Activated CD4-positive, alpha-beta T cell treated with anti-CD3 and anti-CD28 coated beads, Interleukin-2, amount 10 ng/mL, durations not matched to agents 24 days and 14 days (primary cell): ENCODE measurements at regions of chr6 and their contacts with region 1.

Region 1: DNA sequence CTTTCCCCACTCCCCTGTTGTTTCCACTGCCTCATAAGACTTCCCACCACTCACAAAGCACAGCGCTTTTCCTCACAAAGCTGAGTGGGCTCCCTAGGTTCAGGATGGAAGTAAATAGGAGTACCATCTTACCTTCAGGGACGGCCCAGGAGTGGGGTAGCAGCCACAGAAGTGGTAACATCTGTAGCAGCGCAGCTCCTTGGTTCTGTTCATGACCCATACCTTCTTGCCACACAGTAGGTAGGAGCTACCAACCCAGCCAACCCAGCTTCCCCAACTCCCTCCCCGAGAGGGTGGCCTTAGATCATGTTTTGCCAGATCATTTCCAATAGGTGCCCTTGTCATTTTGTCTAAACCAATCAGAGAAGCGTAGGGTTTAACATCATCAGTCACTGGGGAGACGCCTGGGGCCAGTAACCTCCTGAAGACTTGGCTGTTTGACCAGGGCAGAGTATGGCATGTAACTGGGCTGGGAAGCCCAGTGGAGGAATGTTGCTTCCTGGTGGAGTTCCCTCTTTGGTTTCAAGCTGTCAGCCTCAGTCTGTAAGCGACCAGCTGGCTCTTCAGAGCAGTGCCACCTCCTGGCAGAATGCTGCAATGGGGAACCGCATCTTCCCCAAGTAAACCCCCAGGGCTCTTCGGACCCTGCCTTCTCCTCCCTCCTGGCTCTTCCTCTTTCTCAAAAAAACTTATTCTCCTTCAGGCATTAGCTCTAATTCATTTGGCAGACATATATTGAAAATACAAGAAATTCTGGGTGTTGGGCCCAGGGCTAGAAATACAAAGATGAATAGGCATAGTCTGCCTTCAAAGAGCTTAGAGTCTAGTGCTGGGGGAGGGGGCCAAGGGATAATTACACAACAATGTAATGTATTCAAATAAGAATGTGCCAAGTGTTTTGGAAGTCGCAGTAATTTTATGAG is at the start of gene HLA-DMA:
- DNase-seq: peak; percentile 94
- H3K4me3 Mint-ChIP-seq: peak within 1 kb of the TSS; percentile 84
- H3K27ac Mint-ChIP-seq: peak within 1 kb of the TSS; percentile 77
- H3K4me1 Mint-ChIP-seq: peaks cover 49% of the 10 kb centered on the region
- H3K27me3 Mint-ChIP-seq: no peaks in the 10 kb centered on the region
- total RNA-seq, gene HLA-DMA: 8.1 and 8.7 TPM in 2 replicates

Region 2: GRCh38 chr6:32885698-32886286 is 67.3 kb before region 1 on chr6:
- intact Hi-C with region 1: loop called (anchors 1 kb)
- DNase-seq: no peak
- H3K4me3 Mint-ChIP-seq: no peak overlapping the region
- H3K27ac Mint-ChIP-seq: no peak overlapping the region
- H3K4me1 Mint-ChIP-seq: peaks cover 6% of the 10 kb centered on the region
- H3K27me3 Mint-ChIP-seq: peaks cover 5% of the 10 kb centered on the region

Region 3: GRCh38 chr6:32894080-32895005 is 58.7 kb before region 1 on chr6:
- intact Hi-C with region 1: loop called (anchors 1 kb)
- DNase-seq: peak; percentile 99
- H3K4me3 Mint-ChIP-seq: peak overlapping the region; percentile 99
- H3K27ac Mint-ChIP-seq: peak overlapping the region; percentile 92
- H3K4me1 Mint-ChIP-seq: peaks cover 37% of the 10 kb centered on the region
- H3K27me3 Mint-ChIP-seq: peaks cover 2% of the 10 kb centered on the region

Region 4: GRCh38 chr6:32920715-32921114 is 32.4 kb before region 1 on chr6:
- intact Hi-C with region 1: no loop called
- DNase-seq: no peak
- H3K4me3 Mint-ChIP-seq: no peak overlapping the region
- H3K27ac Mint-ChIP-seq: no peak overlapping the region
- H3K4me1 Mint-ChIP-seq: no peaks in the 10 kb centered on the region
- H3K27me3 Mint-ChIP-seq: peaks cover 51% of the 10 kb centered on the region

Region 5: DNA sequence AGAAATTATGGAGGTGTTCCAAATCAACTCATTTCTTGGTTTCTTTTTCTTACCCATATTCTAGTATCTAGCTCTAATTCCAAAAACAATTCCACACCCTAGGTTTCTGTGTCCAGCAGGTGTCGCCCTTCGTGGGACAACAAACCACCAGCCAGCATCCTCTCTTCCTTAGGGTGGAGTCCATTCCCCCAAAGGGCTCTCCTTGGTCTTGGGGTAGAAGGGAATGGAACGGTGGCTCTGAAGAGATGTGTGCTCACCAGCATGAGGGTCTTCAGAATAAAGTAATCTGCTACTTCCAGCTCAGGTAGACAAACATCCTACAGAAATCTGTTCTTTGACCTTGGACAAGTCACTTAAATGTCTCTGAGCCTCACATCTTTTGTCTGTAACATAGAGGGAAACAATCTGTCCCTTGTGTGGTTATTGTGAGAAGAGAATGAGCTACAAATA is 19.4 kb before region 1 on chr6:
- intact Hi-C with region 1: loop called (anchors 2 kb)
- DNase-seq: peak; percentile 93
- H3K4me3 Mint-ChIP-seq: no peak overlapping the region
- H3K27ac Mint-ChIP-seq: no peak overlapping the region
- H3K4me1 Mint-ChIP-seq: peaks cover 5% of the 10 kb centered on the region
- H3K27me3 Mint-ChIP-seq: peaks cover 26% of the 10 kb centered on the region

Region 6: GRCh38 chr6:32940656-32941213 is 12.3 kb before region 1 on chr6 and contains the start of gene HLA-DMB:
- intact Hi-C with region 1: loop called (anchors 1 kb)
- DNase-seq: peak; percentile 88
- H3K4me3 Mint-ChIP-seq: peak within 1 kb of the TSS; percentile 81
- H3K27ac Mint-ChIP-seq: peak within 1 kb of the TSS; percentile 84
- H3K4me1 Mint-ChIP-seq: peaks cover 52% of the 10 kb centered on the region
- H3K27me3 Mint-ChIP-seq: peaks cover 5% of the 10 kb centered on the region
- total RNA-seq, gene HLA-DMB: 0.75 and 0.80 TPM in 2 replicates